ENCODE measurements at regions of chr1 and their contacts with region 1.

Region 1: GRCh38 chr1:164794310-164794709 is 235.3 kb downstream of the PBX1 start:
- DNase-seq: peak; percentile 98
- H3K4me3 ChIP-seq: no peak overlapping the region
- H3K27ac ChIP-seq: peak overlapping the region; percentile 59
- H3K4me1 ChIP-seq: peaks cover 11% of the 10 kb centered on the region
- H3K27me3 ChIP-seq: no peaks in the 10 kb centered on the region

Region 2: GRCh38 chr1:165073185-165074007 is 279.1 kb after region 1 on chr1:
- in situ Hi-C with region 1: loop called (anchors 10 kb)
- DNase-seq: peak; percentile 74
- H3K4me3 ChIP-seq: no peak overlapping the region
- H3K27ac ChIP-seq: no peak overlapping the region
- H3K4me1 ChIP-seq: peaks cover 11% of the 10 kb centered on the region; the same call in 1 of the 2 replicates
- H3K27me3 ChIP-seq: no peaks in the 10 kb centered on the region